ENCODE measurements at regions of chr9 and their contacts with region 1.

Region 1: GRCh38 chr9:123724211-123724796 is 205.6 kb downstream of the DENND1A start:
- DNase-seq: peak in 1 of 5 donors; percentile 16
- ATAC-seq: peak in 1 of 4 donors; percentile 54
- H3K4me3 ChIP-seq: no peak overlapping the region
- H3K27ac ChIP-seq: no peak overlapping the region
- H3K4me1 ChIP-seq: no peaks in the 10 kb centered on the region
- H3K27me3 ChIP-seq: no peaks in the 10 kb centered on the region
- CTCF ChIP-seq: peak in 8 of 12 donors; percentile 12 to 45 (median 27)
- POLR2A ChIP-seq: no peak

Region 2: DNA sequence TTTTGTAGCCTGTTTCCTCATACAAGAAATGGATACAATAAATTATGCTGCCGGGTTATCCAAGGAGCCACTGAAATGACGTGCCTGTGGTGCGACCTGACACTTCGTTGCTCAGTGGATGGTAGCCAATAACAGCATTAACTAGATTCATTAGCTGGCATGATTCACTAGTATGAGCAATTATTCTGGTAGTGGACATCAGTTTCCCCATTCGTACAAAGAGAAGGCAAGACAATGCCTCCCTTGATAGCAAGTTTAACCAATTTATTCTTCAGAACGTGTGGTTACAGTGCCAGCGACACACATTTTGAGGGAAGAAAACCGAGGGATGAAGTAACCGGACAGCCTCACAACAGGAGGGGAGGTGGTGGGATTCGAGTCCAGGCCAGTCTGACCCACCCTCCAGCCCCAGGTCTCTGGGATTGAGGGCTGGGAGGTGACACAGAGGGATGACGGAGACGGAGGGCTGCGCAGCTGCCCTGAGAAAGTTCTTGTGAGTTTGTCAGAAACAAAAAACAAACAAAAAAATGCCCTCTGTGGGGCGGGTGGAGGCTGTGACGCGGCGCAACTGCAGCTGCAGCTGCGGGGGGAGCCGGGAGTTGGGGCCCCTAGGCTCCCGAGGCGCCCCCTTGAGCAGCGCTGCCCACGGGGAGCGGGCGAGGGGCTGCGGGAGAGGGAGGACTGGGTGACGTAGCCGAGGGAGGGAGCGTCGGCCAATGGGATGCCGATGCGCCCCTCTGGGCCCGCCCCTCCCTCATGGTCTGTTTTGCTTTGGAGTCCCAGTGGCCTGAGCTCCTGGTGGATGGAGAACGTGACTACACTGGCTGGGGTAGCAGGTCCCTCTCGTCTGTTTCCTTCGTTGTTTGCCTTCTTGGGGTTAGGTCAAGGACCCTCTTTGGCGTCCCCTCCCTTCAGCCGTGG is 298.2 kb after region 1 on chr9:
- intact Hi-C with region 1: loop called in 1 of 10 experiments (anchors 10 kb)
- DNase-seq: no peak
- ATAC-seq: no peak
- H3K4me3 ChIP-seq: no peak overlapping the region
- H3K27ac ChIP-seq: no peak overlapping the region
- H3K4me1 ChIP-seq: peaks cover 0 to 22% (median 10%) of the 10 kb centered on the region in 12 donors
- H3K27me3 ChIP-seq: peaks cover 42 to 84% (median 71%) of the 10 kb centered on the region in 9 donors
- CTCF ChIP-seq: no peak
- POLR2A ChIP-seq: no peak